Adrenal gland (tissue), 19 donors: ENCODE measurements at regions of chr10 and their contacts with region 1.

Region 1: DNA sequence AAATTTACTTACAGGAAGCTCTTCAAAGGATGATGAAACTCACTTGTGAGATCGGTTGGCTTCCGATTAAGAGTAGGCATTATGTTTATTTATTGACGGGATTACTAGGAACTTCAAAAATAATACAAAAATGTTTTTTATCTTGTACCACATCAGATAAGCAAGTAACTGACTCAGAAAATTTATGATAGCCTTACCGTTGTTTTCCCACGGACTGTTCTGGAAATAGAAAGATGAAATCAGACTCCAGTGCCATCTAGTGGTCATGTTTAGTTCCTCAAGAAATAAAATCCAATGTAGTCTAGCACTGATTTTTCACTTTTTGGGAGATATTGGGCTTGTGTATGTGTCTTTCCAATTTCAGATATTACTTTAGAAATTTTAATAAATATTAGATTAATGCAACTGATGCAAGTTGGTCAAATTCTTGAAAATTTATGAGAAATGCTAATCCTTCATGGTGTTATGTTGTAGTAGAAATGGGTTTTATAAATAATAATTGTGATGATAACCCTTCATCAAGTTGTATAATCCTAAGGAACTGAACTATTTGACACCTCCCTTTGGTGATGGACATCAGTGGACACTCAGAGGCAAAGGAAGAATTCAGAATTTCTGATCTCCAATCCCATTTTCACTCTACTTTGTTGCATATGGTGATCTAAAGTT is 168.8 kb downstream of the TMEM26 start:
- DNase-seq: peak in 4 of 7 donors; percentile 11 to 36 (median 27)
- H3K4me3 ChIP-seq: peak overlapping the region in 1 of 4 donors; percentile 25
- H3K27ac ChIP-seq: peak overlapping the region in 3 of 5 donors; percentile 17 to 57 (median 44)
- H3K4me1 ChIP-seq: peaks cover 5 to 8% of the 10 kb centered on the region in 2 donors
- H3K27me3 ChIP-seq: no peaks in the 10 kb centered on the region
- CTCF ChIP-seq: peak; percentile 74 to 91 (median 82)
- POLR2A ChIP-seq: no peak

Region 2: DNA sequence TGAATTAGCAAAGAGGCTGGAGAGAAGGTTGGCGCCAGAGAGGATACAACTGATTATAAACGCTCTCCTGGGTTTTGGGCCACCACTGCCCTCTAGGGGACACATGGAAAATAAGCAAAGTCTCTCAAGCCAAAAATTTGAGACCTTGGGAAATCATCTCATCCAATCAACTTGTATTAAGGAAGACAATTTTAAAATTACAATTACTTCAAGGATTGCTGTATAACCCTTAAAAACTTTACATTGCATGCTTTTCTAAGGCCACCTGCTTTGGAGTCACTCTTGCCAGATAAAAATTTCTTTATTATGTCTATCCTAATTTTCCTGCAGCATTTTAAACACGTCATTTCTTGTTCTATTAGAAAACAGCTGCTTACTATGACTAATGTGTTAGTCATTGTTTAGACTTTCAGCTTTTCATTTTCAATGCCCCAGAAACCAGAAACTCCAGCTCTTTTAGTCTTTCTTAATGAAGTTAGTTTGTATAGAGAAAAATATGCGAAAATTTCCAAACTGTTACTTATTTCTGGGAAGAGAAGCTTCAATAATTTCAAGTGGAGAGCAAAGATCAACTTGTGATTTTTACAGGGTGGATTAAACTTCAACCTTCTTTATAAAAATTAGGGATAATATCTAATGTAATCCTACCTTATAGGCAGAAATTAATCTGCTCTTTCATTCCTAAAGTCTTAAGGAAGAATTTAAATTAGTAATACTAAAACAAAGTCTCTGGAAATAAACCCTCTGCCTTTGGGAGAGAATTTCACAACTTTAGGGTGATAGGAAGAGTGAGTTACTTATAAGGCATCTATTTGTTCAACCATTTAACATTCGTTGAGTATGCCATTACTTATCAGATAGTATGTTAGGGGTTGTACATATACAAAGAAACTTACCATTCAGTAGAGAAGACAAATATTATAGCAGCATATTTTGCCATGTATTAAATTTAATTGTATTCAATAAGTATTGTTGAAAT is 319.8 kb before region 1 on chr10:
- intact Hi-C with region 1: loop called in 1 of 2 experiments (anchors 10 kb)
- DNase-seq: peak; percentile 77 to 90 (median 82)
- H3K4me3 ChIP-seq: peak overlapping the region in 1 of 4 donors; percentile 32
- H3K27ac ChIP-seq: peak overlapping the region; percentile 59 to 86 (median 72)
- H3K4me1 ChIP-seq: peaks cover 10 to 33% of the 10 kb centered on the region in 2 donors
- H3K27me3 ChIP-seq: no peaks in the 10 kb centered on the region
- CTCF ChIP-seq: peak; percentile 78 to 93 (median 87)
- POLR2A ChIP-seq: peak in 1 of 2 donors; percentile 38

Region 3: DNA sequence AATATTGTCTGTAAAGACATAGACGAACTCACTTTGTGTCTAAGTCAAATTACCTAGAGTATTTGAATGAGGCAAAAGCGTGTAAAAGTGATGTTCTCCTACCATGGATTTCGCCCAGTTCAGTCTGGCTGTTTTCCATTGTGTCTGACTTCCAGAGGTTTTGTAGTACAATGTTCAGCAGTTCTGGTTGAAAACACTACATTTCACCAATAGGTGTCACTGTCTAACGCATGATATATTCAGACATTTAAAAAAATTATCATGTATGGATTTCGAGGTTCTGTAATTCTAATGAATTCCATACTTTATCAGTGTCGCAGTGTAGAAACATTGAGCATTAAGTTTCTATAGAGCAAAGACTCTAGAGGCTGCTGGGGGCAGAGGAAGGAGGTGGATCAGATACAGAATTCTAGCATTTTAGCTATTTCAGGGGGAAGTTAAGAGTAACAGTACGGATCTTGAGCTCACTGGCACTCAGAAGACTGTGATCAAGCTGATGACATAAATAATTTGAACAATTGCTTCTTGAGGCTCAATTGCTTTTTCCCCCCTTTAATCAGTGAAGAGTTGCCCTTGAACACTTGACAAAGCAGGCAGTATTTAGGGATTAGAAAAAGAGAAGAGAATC is 143.5 kb before region 1 on chr10:
- intact Hi-C with region 1: loop called in 1 of 2 experiments (anchors 5 kb)
- DNase-seq: peak; percentile 19 to 65 (median 36)
- H3K4me3 ChIP-seq: no peak overlapping the region
- H3K27ac ChIP-seq: no peak overlapping the region
- H3K4me1 ChIP-seq: peaks cover 0 to 13% of the 10 kb centered on the region in 2 donors
- H3K27me3 ChIP-seq: no peaks in the 10 kb centered on the region
- CTCF ChIP-seq: peak; percentile 41 to 82 (median 74)
- POLR2A ChIP-seq: no peak

Region 4: DNA sequence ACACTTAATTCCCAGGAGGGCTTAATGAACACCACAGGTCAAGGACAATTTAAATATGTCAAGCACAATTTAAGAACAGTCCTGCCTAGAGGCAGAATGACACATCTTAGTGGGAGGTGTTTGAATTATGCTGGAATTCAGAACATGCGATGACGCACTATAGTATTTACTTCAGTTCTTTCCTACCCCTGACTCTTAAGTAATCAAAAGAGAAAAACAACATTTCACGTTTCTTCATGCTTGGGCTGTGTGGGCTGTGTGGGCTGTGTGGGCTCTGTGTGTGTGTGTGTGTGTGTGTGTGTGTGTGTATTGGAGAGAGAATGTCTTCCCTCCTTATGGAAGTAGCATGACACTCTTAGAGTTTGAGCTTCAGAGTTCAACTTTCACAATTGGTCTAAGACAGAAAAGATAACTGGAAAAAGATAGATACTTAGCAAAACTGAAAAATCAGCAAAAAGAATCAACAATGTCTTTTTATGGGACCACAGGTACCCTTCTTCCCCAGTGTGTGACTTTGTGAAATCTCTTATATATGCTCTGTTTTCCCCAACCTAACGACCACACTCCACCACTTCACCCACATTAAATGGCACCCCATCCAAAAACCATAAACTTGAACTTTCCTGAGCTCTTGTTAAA is 344.6 kb after region 1 on chr10:
- intact Hi-C with region 1: no loop called
- DNase-seq: no peak
- H3K4me3 ChIP-seq: no peak overlapping the region
- H3K27ac ChIP-seq: peak overlapping the region in 1 of 5 donors; percentile 57
- H3K4me1 ChIP-seq: no peaks in the 10 kb centered on the region
- H3K27me3 ChIP-seq: no peaks in the 10 kb centered on the region
- CTCF ChIP-seq: no peak
- POLR2A ChIP-seq: no peak